Activated B cell treated with CpG ODN at 0.5 μM for 24 hours (primary cell): ENCODE measurements at regions of chr12 and their contacts with region 1.

Region 1: GRCh38 chr12:89542912-89543592 is 17.2 kb upstream of the POC1B start:
- DNase-seq: peak; percentile 22
- ATAC-seq: peak; percentile 86
- H3K4me3 Mint-ChIP-seq: no peak overlapping the region
- H3K27ac Mint-ChIP-seq: no peak overlapping the region
- H3K4me1 Mint-ChIP-seq: peaks cover 11% of the 10 kb centered on the region
- H3K27me3 Mint-ChIP-seq: no peaks in the 10 kb centered on the region
- CTCF ChIP-seq: peak; percentile 93

Region 2: GRCh38 chr12:90013409-90013808 is 470.4 kb after region 1 on chr12:
- CTCF ChIA-PET with region 1: interaction called, 53 read pairs
- POLR2A ChIA-PET with region 1: interaction called, 3 read pairs
- intact Hi-C with region 1: loop called (anchors 1 kb)
- DNase-seq: no peak
- ATAC-seq: peak; percentile 90
- H3K4me3 Mint-ChIP-seq: no peak overlapping the region
- H3K27ac Mint-ChIP-seq: no peak overlapping the region
- H3K4me1 Mint-ChIP-seq: peaks cover 16% of the 10 kb centered on the region
- H3K27me3 Mint-ChIP-seq: no peaks in the 10 kb centered on the region
- CTCF ChIP-seq: no peak

Region 3: DNA sequence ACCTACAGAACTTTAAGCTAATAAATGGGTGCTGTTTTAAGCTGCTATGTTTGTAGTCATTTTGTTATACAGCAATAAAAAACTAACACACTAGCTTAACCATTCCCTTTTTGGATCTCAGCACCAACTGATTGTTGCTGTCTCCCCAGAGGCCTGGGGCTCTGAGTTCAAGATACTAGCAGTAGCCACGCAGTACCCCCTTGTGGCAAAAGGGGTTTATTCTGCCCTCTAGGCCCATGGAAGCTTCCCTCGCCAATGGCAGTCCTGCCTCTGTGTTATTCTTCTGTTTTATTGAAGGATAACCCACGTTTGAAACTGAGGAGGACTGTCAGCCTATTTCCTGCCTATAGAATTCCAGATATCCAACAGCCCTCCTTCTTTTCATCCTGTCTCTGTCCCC is 620.9 kb after region 1 on chr12:
- CTCF ChIA-PET with region 1: interaction called, 28 read pairs
- POLR2A ChIA-PET with region 1: no interaction called
- intact Hi-C with region 1: loop called (anchors 2 kb)
- DNase-seq: no peak
- ATAC-seq: no peak
- H3K4me3 Mint-ChIP-seq: no peak overlapping the region
- H3K27ac Mint-ChIP-seq: no peak overlapping the region
- H3K4me1 Mint-ChIP-seq: no peaks in the 10 kb centered on the region
- H3K27me3 Mint-ChIP-seq: no peaks in the 10 kb centered on the region
- CTCF ChIP-seq: no peak

Region 4: DNA sequence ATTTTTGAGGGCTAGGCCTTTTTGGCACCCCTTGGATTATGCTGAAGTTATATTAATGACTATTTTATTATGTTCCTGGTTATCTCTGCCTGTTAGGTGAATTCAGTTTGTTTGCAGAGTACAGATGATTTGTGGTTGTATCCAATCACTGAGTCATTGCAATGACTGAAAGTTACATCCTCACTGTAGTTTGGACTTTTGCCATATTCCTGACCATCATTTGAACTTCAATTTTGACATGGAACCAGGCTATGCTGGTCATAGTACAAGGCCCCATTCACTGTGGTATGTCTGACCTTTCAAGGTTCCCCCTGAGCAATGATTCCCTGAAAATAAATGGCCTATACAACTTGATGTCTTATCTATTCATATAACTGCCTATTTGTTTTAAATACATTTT is 790.9 kb after region 1 on chr12:
- CTCF ChIA-PET with region 1: no interaction called
- POLR2A ChIA-PET with region 1: no interaction called
- intact Hi-C with region 1: loop called (anchors 10 kb)
- DNase-seq: no peak
- ATAC-seq: no peak
- H3K4me3 Mint-ChIP-seq: no peak overlapping the region
- H3K27ac Mint-ChIP-seq: no peak overlapping the region
- H3K4me1 Mint-ChIP-seq: no peaks in the 10 kb centered on the region
- H3K27me3 Mint-ChIP-seq: no peaks in the 10 kb centered on the region
- CTCF ChIP-seq: no peak

Region 5: DNA sequence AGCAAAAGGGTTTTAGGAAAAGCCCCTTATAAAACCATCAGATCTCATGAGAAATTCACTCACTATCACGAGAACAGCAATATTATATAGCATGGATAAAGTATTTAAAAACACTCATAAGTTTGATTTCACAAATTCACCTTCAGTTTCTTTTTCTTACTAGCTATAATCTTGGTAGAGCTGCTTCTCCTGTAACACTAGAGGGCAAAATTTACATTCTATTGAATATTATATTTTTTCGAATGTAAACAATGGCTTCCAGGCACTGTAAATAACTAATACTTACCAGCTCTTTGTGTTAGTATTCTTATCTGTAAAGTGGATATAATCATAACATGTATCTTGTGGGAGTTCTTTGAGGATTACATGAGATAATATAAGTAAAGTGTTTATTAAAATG is 1152.4 kb after region 1 on chr12:
- CTCF ChIA-PET with region 1: no interaction called
- POLR2A ChIA-PET with region 1: no interaction called
- intact Hi-C with region 1: loop called (anchors 10 kb)
- DNase-seq: no peak
- ATAC-seq: no peak
- H3K4me3 Mint-ChIP-seq: no peak overlapping the region
- H3K27ac Mint-ChIP-seq: no peak overlapping the region
- H3K4me1 Mint-ChIP-seq: no peaks in the 10 kb centered on the region
- H3K27me3 Mint-ChIP-seq: no peaks in the 10 kb centered on the region
- CTCF ChIP-seq: no peak

Region 6: DNA sequence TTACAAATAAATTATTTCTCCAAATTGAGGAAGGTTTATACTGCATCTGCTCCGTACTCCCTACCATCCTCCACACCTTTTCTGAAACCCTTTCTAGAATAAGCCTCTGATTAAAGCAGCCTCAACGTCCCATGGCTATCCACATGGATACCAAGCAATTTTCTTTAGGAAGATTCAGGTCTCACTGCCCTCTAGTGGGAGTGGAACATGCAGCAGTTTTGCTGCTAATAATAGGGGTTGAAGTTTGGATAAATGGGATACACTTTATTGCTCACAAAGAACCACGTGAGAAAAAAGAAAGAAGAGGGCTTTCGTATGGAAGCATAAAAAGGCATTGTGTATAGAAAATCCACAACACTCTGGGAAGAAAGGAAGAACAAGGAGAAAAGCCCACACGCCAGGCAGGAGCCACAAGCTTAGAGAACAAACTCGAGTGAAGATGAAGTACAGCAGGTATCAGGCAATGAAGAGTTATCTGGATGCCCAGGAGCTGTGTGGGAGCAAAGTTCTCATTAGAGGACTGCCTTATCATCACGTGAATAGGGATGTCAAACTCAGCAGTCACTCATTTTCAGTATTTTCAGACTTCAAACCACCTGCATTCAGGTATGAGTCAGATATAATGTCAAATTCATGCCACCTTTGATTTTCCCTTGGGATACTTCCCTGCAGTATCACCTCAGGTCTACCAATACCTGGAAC is 1366.2 kb after region 1 on chr12:
- CTCF ChIA-PET with region 1: no interaction called
- POLR2A ChIA-PET with region 1: no interaction called
- intact Hi-C with region 1: loop called (anchors 2 kb)
- DNase-seq: no peak
- ATAC-seq: no peak
- H3K4me3 Mint-ChIP-seq: no peak overlapping the region
- H3K27ac Mint-ChIP-seq: no peak overlapping the region
- H3K4me1 Mint-ChIP-seq: no peaks in the 10 kb centered on the region
- H3K27me3 Mint-ChIP-seq: peaks cover 1% of the 10 kb centered on the region
- CTCF ChIP-seq: no peak

Region 7: DNA sequence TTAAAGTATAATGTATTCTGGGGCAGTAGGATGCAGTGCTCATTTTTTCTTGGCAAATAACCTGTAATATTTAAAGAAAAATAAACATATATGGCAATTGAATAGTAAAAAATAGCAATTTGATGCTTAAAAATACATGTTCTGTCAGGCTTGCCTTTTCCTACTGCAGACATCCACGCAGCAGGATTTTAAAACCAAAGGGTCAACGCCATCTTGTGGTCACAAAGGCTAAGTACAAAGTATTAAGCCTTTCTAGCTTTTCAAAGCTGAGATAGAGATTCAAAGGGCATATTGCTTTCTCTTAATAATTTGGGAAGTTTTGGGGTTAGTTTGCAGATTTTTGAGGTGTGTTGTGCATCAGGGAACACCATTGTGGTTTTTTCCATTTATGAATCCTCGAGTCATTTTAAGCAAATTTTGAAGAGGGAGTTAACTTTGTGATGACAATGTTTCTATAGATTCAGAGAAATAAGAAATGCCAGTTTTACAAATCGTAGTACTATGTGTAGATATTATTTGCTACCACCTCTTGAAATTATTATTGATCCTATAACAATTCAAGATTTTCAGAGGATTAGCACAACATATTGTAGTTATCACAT is 1416.6 kb after region 1 on chr12:
- CTCF ChIA-PET with region 1: no interaction called
- POLR2A ChIA-PET with region 1: no interaction called
- intact Hi-C with region 1: loop called (anchors 1 kb)
- DNase-seq: no peak
- ATAC-seq: peak; percentile 60
- H3K4me3 Mint-ChIP-seq: no peak overlapping the region
- H3K27ac Mint-ChIP-seq: no peak overlapping the region
- H3K4me1 Mint-ChIP-seq: no peaks in the 10 kb centered on the region
- H3K27me3 Mint-ChIP-seq: no peaks in the 10 kb centered on the region
- CTCF ChIP-seq: no peak